GM12878 (cell line): ENCODE measurements at regions of chr2 and their contacts with region 1.

Region 1: GRCh38 chr2:196076778-196077568 is 8.3 kb upstream of the DNAH7 start:
- DNase-seq: no peak
- ATAC-seq: peak; percentile 68
- H3K4me3 ChIP-seq: no peak overlapping the region
- H3K27ac ChIP-seq: no peak overlapping the region; the same call in 1 of the 2 replicates
- H3K4me1 ChIP-seq: peaks cover 14% of the 10 kb centered on the region
- H3K27me3 ChIP-seq: no peaks in the 10 kb centered on the region
- CTCF ChIP-seq: no peak
- EP300 ChIP-seq: no peak
- POLR2A ChIP-seq: no peak
- RAD21 ChIP-seq: no peak

Region 2: GRCh38 chr2:195656859-195657633 is 419.9 kb before region 1 on chr2 and contains the start of gene SLC39A10:
- CTCF ChIA-PET with region 1: interaction called, 10 read pairs
- POLR2A ChIA-PET with region 1: no interaction called
- RAD21 ChIA-PET with region 1: no interaction called
- SMC1A ChIA-PET with region 1: no interaction called
- in situ Hi-C with region 1: no loop called
- intact Hi-C with region 1: no loop called
- DNase-seq: peak; percentile 93
- ATAC-seq: peak; percentile 78
- H3K4me3 ChIP-seq: peak within 1 kb of the TSS; percentile 98
- H3K27ac ChIP-seq: peak within 1 kb of the TSS; percentile 96
- H3K4me1 ChIP-seq: no peaks in the 10 kb centered on the region
- H3K27me3 ChIP-seq: no peaks in the 10 kb centered on the region
- CTCF ChIP-seq: peak in 1 of 3 experiments; percentile 25; a peak in 1 of 6 replicates
- EP300 ChIP-seq: 0 out of 4 replicates have a peak, but pooled peaks of 1 of the 2 experiments have one; percentile 18
- POLR2A ChIP-seq: peak; percentile 98
- RAD21 ChIP-seq: no peak
- polyA plus RNA-seq, gene SLC39A10: 2.0 to 4.9 TPM

Region 3: DNA sequence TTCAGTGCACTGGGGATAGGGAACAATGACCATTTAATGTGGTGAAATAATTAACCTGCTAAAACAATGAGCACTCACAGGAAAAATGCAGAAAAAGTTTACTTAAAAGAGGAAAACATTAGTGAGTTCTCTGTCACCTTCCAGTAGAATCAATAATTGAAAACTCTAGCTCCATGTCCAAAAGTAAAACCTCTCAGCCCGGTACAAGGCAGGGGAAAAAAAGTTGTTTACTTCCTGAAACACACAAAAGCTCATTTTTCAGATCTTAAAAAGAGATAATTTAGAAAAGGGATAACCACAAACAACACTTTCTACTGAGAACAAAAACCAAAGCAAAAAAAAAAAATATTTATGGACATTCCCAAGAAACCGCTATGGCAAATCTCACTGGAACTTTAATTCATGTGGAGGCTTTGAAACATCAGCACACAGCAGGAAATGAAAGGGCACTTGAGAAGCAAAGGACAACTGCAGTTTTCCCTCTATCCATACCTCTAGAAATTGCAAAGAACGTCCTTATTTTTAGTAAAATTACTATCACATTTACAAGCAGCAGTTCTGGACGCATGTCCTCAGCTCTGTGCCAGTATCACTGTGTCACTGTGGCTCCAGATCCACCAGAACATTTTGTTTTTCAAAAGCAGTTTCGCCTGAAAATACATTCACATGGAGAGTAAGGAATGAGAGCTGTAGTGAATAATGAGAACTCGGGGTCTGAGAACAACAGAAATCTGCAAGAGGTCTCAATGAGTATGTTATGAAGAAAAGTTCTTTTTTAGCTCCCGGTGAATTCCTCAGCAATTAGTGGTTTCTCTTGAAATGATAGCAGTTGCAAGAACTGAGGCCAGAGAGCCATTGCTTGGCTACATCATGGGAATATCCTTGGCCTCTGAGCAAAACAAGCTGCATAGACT is 36.3 kb after region 1 on chr2:
- CTCF ChIA-PET with region 1: interaction called, 20 read pairs
- POLR2A ChIA-PET with region 1: no interaction called
- RAD21 ChIA-PET with region 1: interaction called, 23 read pairs
- SMC1A ChIA-PET with region 1: interaction called, 6 read pairs
- in situ Hi-C with region 1: no loop called
- intact Hi-C with region 1: no loop called
- DNase-seq: no peak
- ATAC-seq: no peak
- H3K4me3 ChIP-seq: no peak overlapping the region
- H3K27ac ChIP-seq: no peak overlapping the region
- H3K4me1 ChIP-seq: 0 out of 2 replicates have a peak, but pooled peaks cover 2% of the 10 kb centered on the region
- H3K27me3 ChIP-seq: no peaks in the 10 kb centered on the region
- CTCF ChIP-seq: no peak
- EP300 ChIP-seq: no peak
- POLR2A ChIP-seq: no peak
- RAD21 ChIP-seq: no peak

Region 4: GRCh38 chr2:196160101-196160500 is 83.1 kb after region 1 on chr2:
- CTCF ChIA-PET with region 1: interaction called, 62 read pairs
- POLR2A ChIA-PET with region 1: interaction called, 26 read pairs
- RAD21 ChIA-PET with region 1: interaction called, 35 read pairs
- SMC1A ChIA-PET with region 1: interaction called, 124 read pairs
- in situ Hi-C with region 1: no loop called
- intact Hi-C with region 1: no loop called
- DNase-seq: peak; percentile 86
- ATAC-seq: peak; percentile 64
- H3K4me3 ChIP-seq: no peak overlapping the region; the same call in 1 of the 2 replicates
- H3K27ac ChIP-seq: peak overlapping the region; percentile 77
- H3K4me1 ChIP-seq: peaks cover 29% of the 10 kb centered on the region
- H3K27me3 ChIP-seq: no peaks in the 10 kb centered on the region
- CTCF ChIP-seq: no peak
- EP300 ChIP-seq: peak; percentile 93
- POLR2A ChIP-seq: no peak
- RAD21 ChIP-seq: peak; percentile 17; the same call in 1 of the 2 replicates

Region 5: GRCh38 chr2:196220671-196221070 is 143.7 kb after region 1 on chr2:
- CTCF ChIA-PET with region 1: interaction called, 18 read pairs
- POLR2A ChIA-PET with region 1: no interaction called
- RAD21 ChIA-PET with region 1: interaction called, 11 read pairs
- SMC1A ChIA-PET with region 1: interaction called, 34 read pairs
- in situ Hi-C with region 1: no loop called
- intact Hi-C with region 1: no loop called
- DNase-seq: no peak
- ATAC-seq: no peak
- H3K4me3 ChIP-seq: no peak overlapping the region
- H3K27ac ChIP-seq: no peak overlapping the region
- H3K4me1 ChIP-seq: no peaks in the 10 kb centered on the region
- H3K27me3 ChIP-seq: no peaks in the 10 kb centered on the region
- CTCF ChIP-seq: no peak; a peak in 1 of 6 replicates
- EP300 ChIP-seq: no peak
- POLR2A ChIP-seq: no peak
- RAD21 ChIP-seq: no peak

Region 6: GRCh38 chr2:196249860-196250259 is 172.9 kb after region 1 on chr2:
- CTCF ChIA-PET with region 1: interaction called, 11 read pairs
- POLR2A ChIA-PET with region 1: no interaction called
- RAD21 ChIA-PET with region 1: interaction called, 16 read pairs
- SMC1A ChIA-PET with region 1: interaction called, 6 read pairs
- in situ Hi-C with region 1: no loop called
- intact Hi-C with region 1: no loop called
- DNase-seq: no peak
- ATAC-seq: peak; percentile 92
- H3K4me3 ChIP-seq: no peak overlapping the region
- H3K27ac ChIP-seq: no peak overlapping the region
- H3K4me1 ChIP-seq: peaks cover 4% of the 10 kb centered on the region
- H3K27me3 ChIP-seq: no peaks in the 10 kb centered on the region
- CTCF ChIP-seq: no peak
- EP300 ChIP-seq: no peak; a peak in 1 of 4 replicates
- POLR2A ChIP-seq: no peak
- RAD21 ChIP-seq: peak; percentile 10; the same call in 1 of the 2 replicates

Region 7: GRCh38 chr2:196284144-196284844 is 207.3 kb after region 1 on chr2:
- CTCF ChIA-PET with region 1: interaction called, 197 read pairs
- POLR2A ChIA-PET with region 1: interaction called, 7 read pairs
- RAD21 ChIA-PET with region 1: interaction called, 211 read pairs
- SMC1A ChIA-PET with region 1: interaction called, 248 read pairs
- in situ Hi-C with region 1: loop called (anchors 5 kb)
- intact Hi-C with region 1: no loop called
- DNase-seq: no peak
- ATAC-seq: no peak
- H3K4me3 ChIP-seq: no peak overlapping the region
- H3K27ac ChIP-seq: no peak overlapping the region
- H3K4me1 ChIP-seq: peaks cover 21% of the 10 kb centered on the region; the same call in 1 of the 2 replicates
- H3K27me3 ChIP-seq: no peaks in the 10 kb centered on the region
- CTCF ChIP-seq: no peak
- EP300 ChIP-seq: no peak
- POLR2A ChIP-seq: no peak
- RAD21 ChIP-seq: no peak